Activated T-helper 1 cell treated with anti-CD3 and anti-CD28 coated beads, Interleukin-12 subunit alpha, Interleukin-12 subunit beta, Interleukin-2, Interleukin-4 antibody, amounts not matched to agents 30 ng/mL and 10 ng/mL and 1 ng/mL, durations not matched to agents 14 hours and 24 hours and 36 hours (primary cell): ENCODE measurements at regions of chr19 and their contacts with region 1.

Region 1: DNA sequence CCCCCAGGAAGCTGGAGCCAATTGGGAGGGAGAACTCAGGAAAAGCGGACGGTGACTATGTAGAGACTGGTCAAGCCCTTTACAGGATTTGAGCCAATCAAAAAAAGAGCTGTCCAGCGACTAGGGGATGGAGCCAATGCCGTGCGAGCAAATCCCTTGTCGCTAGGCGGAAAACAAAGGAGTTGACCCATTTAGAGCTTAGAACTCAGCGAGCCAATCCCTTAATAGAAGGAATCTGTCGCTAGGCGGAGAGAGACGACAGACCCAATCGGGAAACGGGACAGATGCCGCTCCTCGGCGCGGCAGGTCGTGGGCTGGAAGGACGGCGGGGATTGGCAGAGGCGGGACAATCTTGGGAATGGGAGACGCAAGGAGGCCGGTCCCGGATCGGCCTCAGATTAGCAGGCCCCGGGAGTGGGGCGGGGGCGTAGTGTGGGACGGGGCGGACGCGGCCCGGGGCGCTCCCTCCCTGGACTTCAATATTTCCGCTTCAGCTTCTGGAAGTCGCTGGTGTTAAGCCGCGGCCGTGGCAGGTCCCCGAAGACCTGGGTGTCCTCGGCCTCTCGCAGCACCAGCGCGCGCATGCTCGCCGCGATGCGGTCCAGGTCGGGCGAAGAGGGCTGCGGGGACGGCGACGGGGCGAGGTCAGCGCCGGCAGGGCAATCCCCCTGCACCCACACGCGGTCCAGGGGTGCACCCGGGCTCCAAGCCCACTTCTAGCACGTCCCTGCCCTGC is 2.2 kb upstream of the PNKP start:
- DNase-seq: peak; percentile 92
- H3K4me3 Mint-ChIP-seq: no peak overlapping the region
- H3K27ac Mint-ChIP-seq: no peak overlapping the region
- H3K4me1 Mint-ChIP-seq: peaks cover 36% of the 10 kb centered on the region
- H3K27me3 Mint-ChIP-seq: no peaks in the 10 kb centered on the region

Region 2: DNA sequence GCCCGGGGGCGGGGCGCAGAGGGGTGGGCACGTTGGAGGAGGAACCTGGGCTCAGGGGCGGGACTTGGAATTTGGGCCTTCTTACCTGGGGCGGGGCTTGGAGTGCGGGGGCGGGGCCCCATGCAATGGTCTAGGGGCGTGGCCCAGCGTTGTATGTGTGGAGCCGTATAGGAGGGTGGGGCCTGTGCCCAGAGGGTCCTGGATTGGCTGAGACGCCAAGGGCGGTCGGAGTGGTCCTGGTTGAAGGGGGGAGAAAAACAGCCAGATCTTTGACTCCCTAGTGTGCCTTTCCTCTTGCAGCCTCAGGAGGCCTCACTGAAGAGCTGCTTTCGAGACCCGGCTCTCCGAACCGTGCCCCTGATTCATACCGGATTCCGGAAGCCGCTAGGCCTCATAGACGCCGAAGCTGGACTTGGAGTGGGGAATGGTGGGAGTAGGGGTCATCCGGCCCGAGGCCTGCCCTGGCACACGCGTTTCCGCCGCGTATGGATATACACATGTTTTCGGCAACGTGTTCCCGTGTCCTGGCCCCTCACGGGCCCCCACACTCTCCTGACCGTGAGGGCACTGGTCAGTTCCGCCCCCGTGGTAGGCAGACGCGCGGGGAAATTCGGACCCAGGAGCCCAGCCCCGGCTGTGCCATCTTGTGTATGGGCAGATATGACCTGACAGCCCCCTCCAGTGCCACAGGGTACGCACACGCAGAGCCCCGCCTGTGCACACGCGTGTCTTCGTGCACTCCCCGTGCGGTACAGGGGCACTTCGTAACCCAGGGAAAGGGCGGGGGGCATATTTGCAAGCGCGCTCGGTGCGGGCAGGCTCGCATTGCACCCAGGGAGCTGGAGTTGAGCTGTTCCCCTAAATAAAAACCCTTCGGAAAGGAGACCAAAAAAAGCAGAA is 279.3 kb before region 1 on chr19:
- intact Hi-C with region 1: loop called (anchors 1 kb)
- DNase-seq: peak; percentile 93
- H3K4me3 Mint-ChIP-seq: peak overlapping the region; percentile 88
- H3K27ac Mint-ChIP-seq: peak overlapping the region; percentile 84
- H3K4me1 Mint-ChIP-seq: peaks cover 40% of the 10 kb centered on the region
- H3K27me3 Mint-ChIP-seq: peaks cover 10% of the 10 kb centered on the region

Region 3: DNA sequence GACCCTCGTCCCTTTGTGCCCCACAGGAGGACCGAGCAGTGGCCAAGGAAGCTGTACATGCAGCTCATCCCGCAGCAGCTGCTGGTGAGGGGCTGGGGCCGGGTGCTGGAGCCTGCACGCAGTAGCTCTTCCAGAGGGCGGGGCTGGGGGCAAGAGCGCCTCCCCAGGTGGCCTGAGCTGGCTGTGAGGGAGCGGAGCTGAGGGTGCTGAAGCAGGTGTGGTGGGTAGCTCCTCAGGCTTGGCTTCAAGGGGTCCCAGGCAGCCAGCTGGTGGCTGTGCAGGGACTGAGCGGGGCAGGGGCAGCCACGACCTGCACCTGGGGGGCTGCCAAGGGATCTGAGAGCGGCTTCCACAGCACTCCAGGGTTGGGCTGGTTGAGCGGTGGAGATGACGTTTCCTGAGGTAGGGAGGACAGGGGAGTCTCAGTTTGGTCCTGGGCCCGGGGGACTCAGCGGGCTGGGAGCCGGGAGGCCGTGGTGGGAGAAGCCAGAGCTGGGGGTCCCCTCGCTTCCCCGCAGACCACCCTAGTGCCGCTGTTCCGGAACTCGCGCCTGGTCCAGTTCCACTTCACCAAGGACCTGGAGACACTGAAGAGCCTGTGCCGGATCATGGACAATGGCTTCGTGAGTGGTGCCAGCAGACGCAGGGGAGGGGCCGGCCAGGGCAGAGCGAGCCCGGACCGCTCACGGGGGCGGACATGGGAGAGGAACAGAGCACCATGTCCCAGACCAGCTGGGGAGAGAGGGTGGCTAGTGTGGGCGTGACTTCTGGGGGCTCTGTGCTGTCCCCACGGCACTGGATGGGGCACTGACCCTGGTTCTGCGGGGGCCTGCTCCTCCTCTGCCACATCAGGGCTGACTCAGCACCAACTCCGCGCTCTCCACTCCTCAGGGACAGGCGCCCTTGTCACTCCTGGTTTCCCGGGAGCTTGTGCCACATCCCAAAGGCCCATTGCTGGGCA is 11.3 kb before region 1 on chr19:
- intact Hi-C with region 1: no loop called
- DNase-seq: no peak
- H3K4me3 Mint-ChIP-seq: no peak overlapping the region
- H3K27ac Mint-ChIP-seq: no peak overlapping the region
- H3K4me1 Mint-ChIP-seq: peaks cover 4% of the 10 kb centered on the region
- H3K27me3 Mint-ChIP-seq: no peaks in the 10 kb centered on the region

Region 4: GRCh38 chr19:49889687-49890348 is 20.2 kb after region 1 on chr19:
- intact Hi-C with region 1: loop called (anchors 1 kb)
- DNase-seq: peak; percentile 74
- H3K4me3 Mint-ChIP-seq: peak overlapping the region; percentile 80
- H3K27ac Mint-ChIP-seq: peak overlapping the region; percentile 77
- H3K4me1 Mint-ChIP-seq: peaks cover 13% of the 10 kb centered on the region
- H3K27me3 Mint-ChIP-seq: peaks cover 1% of the 10 kb centered on the region

Region 5: GRCh38 chr19:49916842-49917733 is 47.5 kb after region 1 on chr19:
- intact Hi-C with region 1: no loop called
- DNase-seq: no peak
- H3K4me3 Mint-ChIP-seq: no peak overlapping the region
- H3K27ac Mint-ChIP-seq: peak overlapping the region; percentile 74
- H3K4me1 Mint-ChIP-seq: peaks cover 50% of the 10 kb centered on the region
- H3K27me3 Mint-ChIP-seq: no peaks in the 10 kb centered on the region